Heart right ventricle (tissue), 16 donors: ENCODE measurements at regions of chr5 and their contacts with region 1.

Region 1: DNA sequence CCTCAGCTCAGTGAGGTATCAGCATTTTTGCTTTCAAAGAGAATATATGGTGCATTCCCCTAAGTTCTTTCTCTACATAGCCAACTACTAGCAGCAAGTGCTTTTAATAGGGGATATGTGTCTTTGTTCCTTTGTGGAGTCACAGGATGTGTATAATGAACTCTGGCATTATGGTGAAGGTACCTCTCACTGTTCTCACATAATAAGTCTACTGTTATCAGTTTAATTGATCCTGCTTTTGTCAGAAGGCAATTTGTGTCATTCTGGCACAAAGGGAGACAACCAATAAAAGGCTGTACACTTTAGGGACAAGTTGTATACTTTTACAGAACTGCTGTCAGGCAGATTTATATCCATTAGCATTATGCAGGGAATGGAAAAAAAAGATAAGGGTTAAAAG is 531.4 kb upstream of the RIOK2 start:
- DNase-seq: no peak
- ATAC-seq: no peak
- H3K4me3 ChIP-seq: no peak overlapping the region
- H3K27ac ChIP-seq: no peak overlapping the region
- H3K4me1 ChIP-seq: no peaks in the 10 kb centered on the region
- H3K27me3 ChIP-seq: no peaks in the 10 kb centered on the region
- CTCF ChIP-seq: no peak

Region 2: GRCh38 chr5:97764700-97765099 is 50.3 kb after region 1 on chr5:
- intact Hi-C with region 1: loop called in 1 of 10 experiments (anchors 1 kb)
- DNase-seq: no peak
- ATAC-seq: no peak
- H3K4me3 ChIP-seq: no peak overlapping the region
- H3K27ac ChIP-seq: no peak overlapping the region
- H3K4me1 ChIP-seq: no peaks in the 10 kb centered on the region
- H3K27me3 ChIP-seq: no peaks in the 10 kb centered on the region
- CTCF ChIP-seq: no peak